PC-3 (cell line): ENCODE measurements at regions of chr17 and their contacts with region 1.

Region 1: DNA sequence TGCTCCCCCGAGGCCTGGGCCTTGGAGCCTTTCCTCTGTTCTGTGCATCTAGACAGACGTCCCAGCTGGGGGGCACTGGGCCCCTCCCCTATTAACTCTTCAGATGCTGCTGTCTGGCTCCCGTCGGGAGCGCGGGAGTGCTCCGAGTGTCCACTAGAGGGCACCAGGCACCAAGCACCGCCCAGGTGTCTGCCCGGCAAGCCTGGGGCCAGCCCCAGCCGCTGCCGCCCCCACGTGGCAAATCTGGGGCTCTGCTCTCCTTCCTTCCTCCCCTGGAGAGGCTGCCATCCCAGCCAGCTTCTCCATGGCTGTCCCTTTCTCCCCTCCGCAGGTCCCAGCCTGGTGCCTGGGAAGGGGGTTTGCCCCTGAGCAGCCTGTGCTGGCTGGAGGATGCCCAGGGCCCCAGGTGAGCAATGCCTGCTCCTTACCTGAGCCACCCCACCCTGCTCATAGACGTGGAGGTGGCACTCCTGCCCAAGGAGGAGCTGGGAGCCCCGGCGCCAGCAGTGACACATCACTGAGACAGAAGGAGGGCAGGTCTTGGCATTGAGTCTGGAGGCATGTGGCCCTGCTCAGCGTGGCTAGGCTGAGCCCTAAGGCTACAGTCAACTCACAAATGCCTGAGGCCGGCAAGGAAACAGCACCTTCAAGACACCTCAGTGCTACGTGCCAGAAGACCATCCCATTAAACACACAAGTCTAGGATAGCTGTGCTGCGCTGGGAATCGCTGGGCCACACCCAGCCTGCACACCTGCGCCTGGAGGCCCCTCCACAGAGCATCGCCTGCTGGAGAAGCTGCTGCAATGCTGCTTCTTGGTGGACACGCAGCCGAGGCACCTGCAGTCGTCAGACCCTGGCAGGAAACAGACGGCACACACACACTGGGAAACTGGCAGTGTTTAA is 19.7 kb downstream of the TMEM235 start:
- DNase-seq: peak; percentile 94
- ATAC-seq: peak; percentile 87
- H3K4me3 ChIP-seq: peak overlapping the region; percentile 54
- H3K27ac ChIP-seq: peak overlapping the region; percentile 75
- H3K4me1 ChIP-seq: peaks cover 18% of the 10 kb centered on the region
- H3K27me3 ChIP-seq: no peaks in the 10 kb centered on the region
- CTCF ChIP-seq: peak; percentile 100

Region 2: DNA sequence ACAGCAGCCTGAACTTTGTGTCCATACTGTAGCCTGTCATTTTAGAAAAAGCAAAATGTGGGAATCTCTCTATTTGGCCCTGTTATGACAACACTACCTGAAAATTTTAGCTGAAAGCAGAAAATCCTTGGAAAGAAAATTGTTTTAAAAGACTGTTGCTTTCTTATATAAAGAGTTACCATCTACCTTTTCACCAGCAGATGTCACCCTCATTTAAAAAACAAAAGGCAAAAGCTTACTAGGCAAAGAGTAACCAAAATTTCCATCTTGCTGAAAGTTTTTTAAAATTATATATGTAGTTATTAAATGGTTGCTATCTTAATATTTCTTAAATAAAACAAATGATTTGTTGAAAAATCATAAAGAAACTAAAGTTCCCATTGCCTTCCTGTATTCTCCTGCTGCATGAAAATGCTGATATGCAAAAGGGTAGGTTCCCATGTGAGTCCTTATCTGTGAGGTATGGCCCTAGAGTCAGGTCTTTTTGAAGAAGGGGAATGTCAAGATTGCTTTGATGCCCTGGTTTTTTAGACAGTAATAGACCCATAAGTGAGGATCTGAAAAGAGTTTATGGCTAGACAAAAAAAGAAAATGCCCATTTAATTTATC is 231.7 kb before region 1 on chr17:
- CTCF ChIA-PET with region 1: interaction called, 3 read pairs
- POLR2A ChIA-PET with region 1: no interaction called
- intact Hi-C with region 1: loop called (anchors 5 kb)
- DNase-seq: peak; percentile 73
- ATAC-seq: peak; percentile 59; the same call in 1 of the 2 replicates
- H3K4me3 ChIP-seq: no peak overlapping the region
- H3K27ac ChIP-seq: no peak overlapping the region
- H3K4me1 ChIP-seq: no peaks in the 10 kb centered on the region
- H3K27me3 ChIP-seq: 0 out of 2 replicates have a peak, but pooled peaks cover 3% of the 10 kb centered on the region
- CTCF ChIP-seq: peak; percentile 80

Region 3: GRCh38 chr17:78112518-78113226 is 138.5 kb before region 1 on chr17:
- CTCF ChIA-PET with region 1: no interaction called
- POLR2A ChIA-PET with region 1: no interaction called
- intact Hi-C with region 1: loop called (anchors 1 kb)
- DNase-seq: peak; percentile 81
- ATAC-seq: peak; percentile 91
- H3K4me3 ChIP-seq: no peak overlapping the region
- H3K27ac ChIP-seq: no peak overlapping the region
- H3K4me1 ChIP-seq: peaks cover 3% of the 10 kb centered on the region
- H3K27me3 ChIP-seq: no peaks in the 10 kb centered on the region
- CTCF ChIP-seq: peak; percentile 99

Region 4: DNA sequence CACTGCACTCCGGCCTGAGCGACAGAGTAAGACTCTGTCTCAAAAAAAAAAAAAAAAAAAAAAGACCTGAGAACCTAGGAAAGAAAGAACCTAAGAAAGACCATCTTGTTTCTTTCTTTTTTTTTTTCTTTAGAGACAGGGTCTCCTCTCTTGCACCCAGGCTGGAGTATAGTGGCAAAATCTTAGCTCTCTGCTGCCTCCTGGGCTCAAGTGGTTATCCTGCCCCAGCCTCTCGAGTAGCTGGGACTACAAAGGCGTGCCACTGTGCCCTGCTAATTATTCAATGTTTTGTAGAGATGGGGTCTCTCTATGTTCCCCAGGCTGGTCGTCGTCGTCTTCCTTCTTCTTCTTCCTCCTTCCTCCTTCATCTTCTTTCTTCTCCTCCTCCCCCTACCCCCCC is 44.8 kb before region 1 on chr17:
- CTCF ChIA-PET with region 1: interaction called, 10 read pairs
- POLR2A ChIA-PET with region 1: no interaction called
- intact Hi-C with region 1: no loop called
- DNase-seq: no peak
- ATAC-seq: no peak
- H3K4me3 ChIP-seq: no peak overlapping the region
- H3K27ac ChIP-seq: no peak overlapping the region
- H3K4me1 ChIP-seq: no peaks in the 10 kb centered on the region
- H3K27me3 ChIP-seq: no peaks in the 10 kb centered on the region
- CTCF ChIP-seq: no peak

Region 5: GRCh38 chr17:78226749-78227399 is 24.3 kb before region 1 on chr17:
- CTCF ChIA-PET with region 1: interaction called, 10 read pairs
- POLR2A ChIA-PET with region 1: no interaction called
- intact Hi-C with region 1: no loop called
- DNase-seq: peak; percentile 71
- ATAC-seq: peak; percentile 89
- H3K4me3 ChIP-seq: peak overlapping the region; percentile 26; the same call in 1 of the 2 replicates
- H3K27ac ChIP-seq: no peak overlapping the region
- H3K4me1 ChIP-seq: peaks cover 8% of the 10 kb centered on the region; the same call in 1 of the 2 replicates
- H3K27me3 ChIP-seq: peaks cover 3% of the 10 kb centered on the region; the same call in 1 of the 2 replicates
- CTCF ChIP-seq: no peak

Region 6: DNA sequence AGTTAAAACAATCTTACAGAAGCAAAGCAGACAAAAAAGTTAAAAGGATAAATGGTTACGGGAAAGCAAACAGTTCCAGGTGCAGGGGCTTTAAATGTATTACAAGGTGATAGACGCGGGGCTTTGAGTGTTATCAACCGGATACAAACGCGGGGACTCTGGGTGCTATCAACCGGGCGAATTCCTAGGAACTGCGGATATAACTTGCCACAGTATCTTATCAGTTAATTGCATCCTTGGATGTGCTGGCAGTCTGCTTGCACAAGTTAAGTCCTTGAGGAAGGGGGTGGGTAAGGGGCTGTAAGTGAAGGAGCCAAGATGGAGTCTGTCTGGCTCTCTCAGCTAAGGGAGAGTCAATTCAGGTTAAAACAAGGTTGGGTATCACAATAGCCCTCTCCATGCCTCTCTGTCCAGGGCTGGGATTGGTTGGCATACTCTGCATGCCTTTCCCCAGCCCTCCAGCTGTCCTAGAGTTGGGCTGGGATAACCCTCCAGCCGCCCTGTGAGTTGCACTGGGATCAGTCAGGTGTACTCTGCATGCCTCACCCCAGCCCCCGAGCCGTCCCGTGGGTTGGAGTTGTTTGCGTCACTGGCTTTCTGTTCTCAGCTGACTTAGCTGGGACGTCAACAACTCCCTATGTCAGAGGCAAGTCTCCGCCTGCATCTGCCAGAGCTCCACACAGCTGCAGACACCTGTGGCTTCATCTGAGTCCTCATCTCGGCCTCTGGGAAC is 21.2 kb after region 1 on chr17:
- CTCF ChIA-PET with region 1: no interaction called
- POLR2A ChIA-PET with region 1: no interaction called
- intact Hi-C with region 1: no loop called
- DNase-seq: peak; percentile 47
- ATAC-seq: peak; percentile 72
- H3K4me3 ChIP-seq: 0 out of 2 replicates have a peak overlapping the region, but pooled peaks have one; percentile 21
- H3K27ac ChIP-seq: no peak overlapping the region
- H3K4me1 ChIP-seq: peaks cover 6% of the 10 kb centered on the region; the same call in 1 of the 2 replicates
- H3K27me3 ChIP-seq: 0 out of 2 replicates have a peak, but pooled peaks cover 4% of the 10 kb centered on the region
- CTCF ChIP-seq: no peak

Region 7: GRCh38 chr17:78300962-78301822 is 50.0 kb after region 1 on chr17:
- CTCF ChIA-PET with region 1: no interaction called
- POLR2A ChIA-PET with region 1: no interaction called
- intact Hi-C with region 1: no loop called
- DNase-seq: peak; percentile 61
- ATAC-seq: peak; percentile 78
- H3K4me3 ChIP-seq: no peak overlapping the region
- H3K27ac ChIP-seq: peak overlapping the region; percentile 18
- H3K4me1 ChIP-seq: peaks cover 12% of the 10 kb centered on the region
- H3K27me3 ChIP-seq: no peaks in the 10 kb centered on the region
- CTCF ChIP-seq: no peak

Region 8: GRCh38 chr17:78313735-78314648 is 62.8 kb after region 1 on chr17:
- CTCF ChIA-PET with region 1: interaction called, 22 read pairs
- POLR2A ChIA-PET with region 1: no interaction called
- intact Hi-C with region 1: no loop called
- DNase-seq: peak; percentile 99
- ATAC-seq: peak; percentile 62
- H3K4me3 ChIP-seq: peak overlapping the region; percentile 68
- H3K27ac ChIP-seq: peak overlapping the region; percentile 96
- H3K4me1 ChIP-seq: peaks cover 45% of the 10 kb centered on the region
- H3K27me3 ChIP-seq: no peaks in the 10 kb centered on the region
- CTCF ChIP-seq: no peak

Region 9: DNA sequence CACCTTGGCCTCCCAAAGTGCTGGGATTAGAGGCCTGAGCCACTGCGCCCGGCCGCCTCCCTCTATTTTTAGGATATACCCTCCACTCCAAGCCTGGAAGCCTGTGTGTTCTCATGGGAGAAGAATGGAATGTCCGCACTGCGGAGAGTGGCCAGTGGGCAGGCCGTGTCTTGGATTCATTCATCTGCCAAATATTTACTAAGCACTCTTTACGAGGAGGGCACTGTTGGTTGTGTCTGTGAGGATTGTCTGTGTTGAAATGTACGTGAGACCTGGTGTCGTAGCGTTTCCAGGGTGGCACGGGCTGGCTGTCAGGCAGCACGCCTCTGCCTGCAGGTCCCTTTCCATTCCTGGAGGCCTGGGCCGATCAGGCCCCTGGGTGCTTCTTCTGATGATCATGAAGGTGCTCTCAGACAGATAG is 146.5 kb after region 1 on chr17:
- CTCF ChIA-PET with region 1: no interaction called
- POLR2A ChIA-PET with region 1: no interaction called
- intact Hi-C with region 1: no loop called
- DNase-seq: no peak
- ATAC-seq: no peak
- H3K4me3 ChIP-seq: no peak overlapping the region
- H3K27ac ChIP-seq: no peak overlapping the region
- H3K4me1 ChIP-seq: peaks cover 25% of the 10 kb centered on the region
- H3K27me3 ChIP-seq: no peaks in the 10 kb centered on the region
- CTCF ChIP-seq: no peak